MCF 10A (cell line): ENCODE measurements at regions of chr5 and their contacts with region 1.

Region 1: GRCh38 chr5:132883261-132883834 is 9.9 kb downstream of the LEAP2 start:
- DNase-seq: peak; percentile 80
- H3K4me3 Mint-ChIP-seq: no peak overlapping the region
- H3K27ac Mint-ChIP-seq: no peak overlapping the region
- H3K4me1 Mint-ChIP-seq: peaks cover 8% of the 10 kb centered on the region
- H3K27me3 Mint-ChIP-seq: no peaks in the 10 kb centered on the region
- CTCF ChIP-seq: peak; percentile 70

Region 2: DNA sequence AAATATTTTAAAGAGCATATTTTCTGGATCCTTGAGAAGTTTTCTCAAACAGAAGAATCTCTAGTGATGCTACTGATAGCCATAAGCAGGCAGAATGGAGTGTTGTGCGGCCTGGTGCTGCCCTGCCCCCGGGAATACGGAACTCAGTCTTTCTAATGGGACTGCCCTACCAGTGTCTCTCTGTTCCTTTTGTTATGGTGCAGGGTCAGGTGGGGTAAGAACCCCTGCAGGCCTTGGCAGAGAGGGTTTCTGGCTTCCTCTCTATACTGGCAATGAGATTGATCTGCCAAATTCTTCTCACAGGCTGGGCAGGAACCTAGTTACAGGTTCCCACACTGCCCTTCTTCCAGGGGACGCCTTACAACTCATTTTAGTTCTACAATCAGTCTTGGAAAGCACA is 342.6 kb before region 1 on chr5:
- CTCF ChIA-PET with region 1: no interaction called
- POLR2A ChIA-PET with region 1: no interaction called
- intact Hi-C with region 1: no loop called
- DNase-seq: no peak
- H3K4me3 Mint-ChIP-seq: no peak overlapping the region
- H3K27ac Mint-ChIP-seq: no peak overlapping the region
- H3K4me1 Mint-ChIP-seq: no peaks in the 10 kb centered on the region
- H3K27me3 Mint-ChIP-seq: peaks cover 54% of the 10 kb centered on the region
- CTCF ChIP-seq: no peak

Region 3: DNA sequence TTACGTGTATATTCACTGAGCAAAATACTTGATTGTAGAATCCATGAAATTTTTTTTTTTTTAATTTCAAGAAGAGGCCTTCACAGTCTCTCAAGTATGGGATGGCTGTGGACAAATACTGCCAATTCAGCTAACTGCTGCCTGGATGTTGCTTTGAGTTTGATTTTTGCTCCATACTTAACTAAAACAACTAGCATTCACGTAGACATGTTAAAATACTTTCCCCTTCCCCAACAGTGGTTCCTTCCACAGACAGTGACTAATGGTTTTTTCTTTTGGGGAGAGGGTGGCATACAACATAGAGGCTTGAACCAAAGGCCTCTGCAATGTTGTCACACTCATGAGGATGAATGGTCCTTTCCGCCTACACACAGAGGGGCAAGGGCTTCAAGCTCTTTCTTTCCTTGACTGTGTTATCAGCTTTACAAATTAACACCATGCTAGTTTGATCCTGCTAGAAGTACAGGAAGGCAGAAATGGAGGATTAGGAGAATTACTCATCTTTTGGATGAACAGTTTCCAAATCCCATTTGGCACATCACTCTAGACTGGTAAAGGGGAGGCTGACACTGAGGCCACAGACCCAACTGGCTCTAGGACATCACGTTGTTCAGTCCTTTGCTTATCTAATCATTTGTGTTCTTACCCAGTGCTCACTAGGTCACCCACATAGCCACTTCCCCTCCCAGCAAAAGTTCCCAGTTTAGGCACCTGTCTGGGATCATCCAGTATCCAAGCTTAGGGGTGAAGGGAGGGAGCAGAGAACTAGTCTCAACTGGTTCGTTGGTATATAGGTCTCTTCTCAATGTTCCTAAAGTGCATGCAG is 11.7 kb before region 1 on chr5:
- CTCF ChIA-PET with region 1: interaction called, 35 read pairs
- POLR2A ChIA-PET with region 1: interaction called, 16 read pairs
- intact Hi-C with region 1: no loop called
- DNase-seq: no peak
- H3K4me3 Mint-ChIP-seq: no peak overlapping the region
- H3K27ac Mint-ChIP-seq: no peak overlapping the region
- H3K4me1 Mint-ChIP-seq: peaks cover 6% of the 10 kb centered on the region
- H3K27me3 Mint-ChIP-seq: no peaks in the 10 kb centered on the region
- CTCF ChIP-seq: no peak

Region 4: GRCh38 chr5:132895719-132896305 is 12.5 kb after region 1 on chr5:
- CTCF ChIA-PET with region 1: interaction called, 19 read pairs
- POLR2A ChIA-PET with region 1: interaction called, 5 read pairs
- intact Hi-C with region 1: no loop called
- DNase-seq: no peak
- H3K4me3 Mint-ChIP-seq: no peak overlapping the region
- H3K27ac Mint-ChIP-seq: peak overlapping the region; percentile 36
- H3K4me1 Mint-ChIP-seq: no peaks in the 10 kb centered on the region
- H3K27me3 Mint-ChIP-seq: no peaks in the 10 kb centered on the region
- CTCF ChIP-seq: no peak